Activated B cell treated with CpG ODN at 0.5 μM for 24 hours (primary cell): ENCODE measurements at regions of chr6 and their contacts with region 1.

Region 1: GRCh38 chr6:107674995-107675738 is 148.9 kb downstream of the SCML4 start:
- DNase-seq: peak; percentile 78
- ATAC-seq: peak; percentile 91
- H3K4me3 Mint-ChIP-seq: peak overlapping the region; percentile 82
- H3K27ac Mint-ChIP-seq: peak overlapping the region; percentile 95
- H3K4me1 Mint-ChIP-seq: peaks cover 28% of the 10 kb centered on the region
- H3K27me3 Mint-ChIP-seq: peaks cover 3% of the 10 kb centered on the region
- CTCF ChIP-seq: peak; percentile 67

Region 2: GRCh38 chr6:107132330-107132954 is 542.7 kb before region 1 on chr6:
- CTCF ChIA-PET with region 1: no interaction called
- POLR2A ChIA-PET with region 1: no interaction called
- intact Hi-C with region 1: loop called (anchors 1 kb)
- DNase-seq: no peak
- ATAC-seq: no peak
- H3K4me3 Mint-ChIP-seq: no peak overlapping the region
- H3K27ac Mint-ChIP-seq: no peak overlapping the region
- H3K4me1 Mint-ChIP-seq: peaks cover 3% of the 10 kb centered on the region
- H3K27me3 Mint-ChIP-seq: no peaks in the 10 kb centered on the region
- CTCF ChIP-seq: no peak

Region 3: GRCh38 chr6:107489636-107490565 is 185.3 kb before region 1 on chr6 and contains the start of gene SOBP:
- CTCF ChIA-PET with region 1: interaction called, 4 read pairs
- POLR2A ChIA-PET with region 1: interaction called, 4 read pairs
- intact Hi-C with region 1: loop called (anchors 1 kb)
- DNase-seq: peak; percentile 58
- ATAC-seq: peak; percentile 60
- H3K4me3 Mint-ChIP-seq: peak within 1 kb of the TSS; percentile 90
- H3K27ac Mint-ChIP-seq: peak within 1 kb of the TSS; percentile 63
- H3K4me1 Mint-ChIP-seq: peaks cover 26% of the 10 kb centered on the region
- H3K27me3 Mint-ChIP-seq: peaks cover 28% of the 10 kb centered on the region
- CTCF ChIP-seq: no peak
- total RNA-seq, gene SOBP: 1.1 TPM in 2 replicates

Region 4: DNA sequence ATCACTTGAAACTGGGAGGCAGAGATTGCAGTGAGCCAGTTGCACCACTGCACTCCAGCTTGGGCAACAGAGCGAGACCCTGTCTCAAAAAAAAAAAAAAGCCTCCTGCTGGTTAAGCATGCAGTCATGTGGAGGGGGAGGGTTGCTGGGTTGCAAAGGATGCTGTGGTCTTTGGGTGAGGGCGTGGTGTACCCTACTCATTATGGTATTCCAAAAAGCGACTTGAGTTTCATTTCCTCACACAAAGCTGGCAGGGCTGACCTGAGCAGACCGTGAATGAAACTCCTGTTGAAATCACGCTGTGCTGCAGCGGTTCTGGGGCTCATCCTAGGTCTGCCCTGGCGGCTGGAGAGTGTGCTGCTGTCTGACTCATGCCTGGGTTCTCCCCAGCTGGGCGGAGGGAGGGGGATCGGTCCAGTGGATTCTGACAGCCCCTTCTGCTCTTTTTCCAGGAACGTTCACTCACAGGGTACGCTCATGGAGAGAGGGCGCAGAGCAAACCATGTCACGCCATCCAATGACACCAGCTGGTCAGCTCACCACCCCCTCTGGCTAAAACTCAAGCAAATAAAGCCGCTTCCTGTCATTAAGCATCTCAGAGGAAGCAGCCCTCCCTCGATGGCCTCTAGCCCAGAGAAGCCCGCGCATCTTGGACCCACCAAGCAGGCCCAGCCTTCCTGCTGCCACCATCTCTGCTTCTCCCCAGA is 17.3 kb before region 1 on chr6:
- CTCF ChIA-PET with region 1: interaction called, 22 read pairs
- POLR2A ChIA-PET with region 1: interaction called, 59 read pairs
- intact Hi-C with region 1: loop called (anchors 1 kb)
- DNase-seq: peak; percentile 70
- ATAC-seq: peak; percentile 89
- H3K4me3 Mint-ChIP-seq: peak overlapping the region; percentile 82
- H3K27ac Mint-ChIP-seq: peak overlapping the region; percentile 96
- H3K4me1 Mint-ChIP-seq: peaks cover 67% of the 10 kb centered on the region
- H3K27me3 Mint-ChIP-seq: no peaks in the 10 kb centered on the region
- CTCF ChIP-seq: no peak

Region 5: GRCh38 chr6:107847844-107848802 is 173.0 kb after region 1 on chr6:
- CTCF ChIA-PET with region 1: interaction called, 58 read pairs
- POLR2A ChIA-PET with region 1: interaction called, 3 read pairs
- intact Hi-C with region 1: loop called (anchors 1 kb)
- DNase-seq: peak; percentile 82
- ATAC-seq: peak; percentile 89
- H3K4me3 Mint-ChIP-seq: peak overlapping the region; percentile 81
- H3K27ac Mint-ChIP-seq: no peak overlapping the region
- H3K4me1 Mint-ChIP-seq: peaks cover 16% of the 10 kb centered on the region
- H3K27me3 Mint-ChIP-seq: peaks cover 4% of the 10 kb centered on the region
- CTCF ChIP-seq: peak; percentile 99

Region 6: DNA sequence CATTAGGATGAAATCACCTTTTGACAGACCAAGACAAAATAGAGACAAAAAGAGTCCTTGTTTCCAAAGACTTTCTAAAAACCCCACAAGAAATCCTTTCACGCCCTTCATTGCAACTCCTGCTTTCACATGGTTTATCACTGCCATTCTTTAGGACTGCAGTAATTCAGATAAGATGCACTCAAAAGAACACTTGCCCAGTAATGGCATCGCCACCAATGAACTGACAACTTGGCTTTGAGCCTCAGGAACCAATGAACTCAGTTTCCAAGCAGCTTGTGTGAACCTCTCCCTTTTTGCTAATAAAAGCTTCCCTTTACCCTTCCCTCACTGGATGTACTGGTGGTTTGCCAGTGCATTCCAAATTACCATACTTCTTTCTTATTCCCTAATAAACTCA is 377.5 kb after region 1 on chr6:
- CTCF ChIA-PET with region 1: interaction called, 18 read pairs
- POLR2A ChIA-PET with region 1: no interaction called
- intact Hi-C with region 1: loop called (anchors 1 kb)
- DNase-seq: no peak
- ATAC-seq: no peak
- H3K4me3 Mint-ChIP-seq: no peak overlapping the region
- H3K27ac Mint-ChIP-seq: no peak overlapping the region
- H3K4me1 Mint-ChIP-seq: no peaks in the 10 kb centered on the region
- H3K27me3 Mint-ChIP-seq: no peaks in the 10 kb centered on the region
- CTCF ChIP-seq: no peak